Upper lobe of right lung (tissue), 1 donor: ENCODE measurements at regions of chr12 and their contacts with region 1.

Region 1: GRCh38 chr12:38638406-38638805 is 267.0 kb downstream of the CPNE8 start:
- DNase-seq: no peak
- ATAC-seq: peak; percentile 43
- H3K4me3 ChIP-seq: no peak overlapping the region
- H3K27ac ChIP-seq: peak overlapping the region; percentile 17
- H3K4me1 ChIP-seq: no peaks in the 10 kb centered on the region
- H3K27me3 ChIP-seq: no peaks in the 10 kb centered on the region
- CTCF ChIP-seq: no peak

Region 2: DNA sequence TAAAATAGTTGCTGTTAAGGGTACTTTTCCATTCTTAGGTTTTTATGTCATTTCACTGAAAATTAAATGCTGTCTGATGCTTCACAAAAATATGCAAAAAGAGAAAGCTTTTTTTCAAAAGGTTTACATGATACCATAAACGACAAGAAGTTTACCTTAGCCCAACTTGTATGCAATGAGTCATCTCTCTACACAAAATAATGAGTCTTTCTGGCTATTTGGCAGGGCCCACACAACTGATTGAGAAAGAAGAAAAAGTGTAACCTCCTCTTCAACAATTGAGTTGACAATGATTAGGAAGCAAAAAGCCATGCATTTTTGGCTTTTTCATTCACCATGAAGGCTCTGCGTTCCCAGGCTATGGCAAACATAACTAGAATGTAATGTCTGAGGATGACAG is 432.4 kb after region 1 on chr12:
- intact Hi-C with region 1: loop called (anchors 10 kb)
- DNase-seq: no peak
- ATAC-seq: no peak
- H3K4me3 ChIP-seq: no peak overlapping the region
- H3K27ac ChIP-seq: no peak overlapping the region
- H3K4me1 ChIP-seq: no peaks in the 10 kb centered on the region
- H3K27me3 ChIP-seq: no peaks in the 10 kb centered on the region
- CTCF ChIP-seq: no peak